Left cardiac atrium (tissue), 4 donors: ENCODE measurements at regions of chr15 and their contacts with region 1.

Region 1: GRCh38 chr15:83673385-83673784 is 19.5 kb downstream of the ADAMTSL3 start:
- DNase-seq: no peak
- ATAC-seq: peak; percentile 74 to 90

Region 2: GRCh38 chr15:83690676-83691075 is 17.3 kb after region 1 on chr15:
- intact Hi-C with region 1: loop called in 1 of 2 experiments (anchors 2 kb)
- DNase-seq: no peak
- ATAC-seq: no peak